Activated naive CD4-positive, alpha-beta T cell treated with anti-CD3 and anti-CD28 coated beads, Interleukin-2, amount 10 ng/mL, durations not matched to agents 7 days and 5 days (primary cell): ENCODE measurements at regions of chr4 and their contacts with region 1.

Region 1: DNA sequence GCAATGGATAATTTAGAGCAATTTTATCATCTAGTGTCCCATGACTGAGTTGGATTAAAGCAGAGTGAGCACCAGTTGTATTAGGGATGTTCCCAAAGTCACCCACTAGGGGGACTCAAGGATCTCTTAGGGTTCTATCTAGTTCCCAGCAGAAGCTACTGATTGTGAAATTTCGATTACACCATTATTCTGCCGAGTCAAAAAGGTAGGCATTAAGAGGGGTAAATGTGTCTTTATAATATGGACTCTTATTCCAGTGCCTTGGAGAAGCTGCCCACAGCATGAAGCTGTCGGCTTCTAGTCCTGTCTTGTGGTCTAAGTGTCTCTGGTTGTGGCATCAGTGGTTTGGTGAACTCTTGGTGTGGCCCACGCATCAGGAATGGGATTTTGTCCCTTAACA is 53.3 kb downstream of the RGS12 start:
- DNase-seq: peak; percentile 59
- H3K4me3 Mint-ChIP-seq: no peak overlapping the region
- H3K27ac Mint-ChIP-seq: no peak overlapping the region
- H3K4me1 Mint-ChIP-seq: peaks cover 16% of the 10 kb centered on the region
- H3K27me3 Mint-ChIP-seq: peaks cover 3% of the 10 kb centered on the region

Region 2: DNA sequence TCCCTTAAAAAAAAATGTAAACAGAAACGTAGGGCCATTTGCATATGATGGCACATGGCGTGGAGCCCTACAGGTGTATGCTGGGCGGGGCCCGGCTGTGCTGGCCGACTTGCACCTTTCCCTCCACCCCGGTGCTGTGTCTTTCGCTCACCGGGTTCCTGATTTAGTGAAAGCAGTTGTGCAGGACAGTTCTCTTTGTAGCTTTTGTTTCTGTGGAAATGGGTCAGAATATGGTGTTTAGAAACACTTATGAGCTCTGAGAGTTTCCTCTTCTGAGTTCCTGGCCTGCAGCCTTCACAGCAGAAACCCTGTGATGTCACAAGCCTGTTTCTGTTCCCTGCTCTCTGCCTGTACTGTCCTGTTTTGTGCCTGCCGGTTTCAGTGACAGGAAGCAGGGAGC is 119.7 kb before region 1 on chr4:
- CTCF ChIA-PET with region 1: no interaction called
- DNase-seq: no peak
- H3K4me3 Mint-ChIP-seq: no peak overlapping the region
- H3K27ac Mint-ChIP-seq: peak overlapping the region; percentile 33
- H3K4me1 Mint-ChIP-seq: peaks cover 4% of the 10 kb centered on the region
- H3K27me3 Mint-ChIP-seq: no peaks in the 10 kb centered on the region

Region 3: DNA sequence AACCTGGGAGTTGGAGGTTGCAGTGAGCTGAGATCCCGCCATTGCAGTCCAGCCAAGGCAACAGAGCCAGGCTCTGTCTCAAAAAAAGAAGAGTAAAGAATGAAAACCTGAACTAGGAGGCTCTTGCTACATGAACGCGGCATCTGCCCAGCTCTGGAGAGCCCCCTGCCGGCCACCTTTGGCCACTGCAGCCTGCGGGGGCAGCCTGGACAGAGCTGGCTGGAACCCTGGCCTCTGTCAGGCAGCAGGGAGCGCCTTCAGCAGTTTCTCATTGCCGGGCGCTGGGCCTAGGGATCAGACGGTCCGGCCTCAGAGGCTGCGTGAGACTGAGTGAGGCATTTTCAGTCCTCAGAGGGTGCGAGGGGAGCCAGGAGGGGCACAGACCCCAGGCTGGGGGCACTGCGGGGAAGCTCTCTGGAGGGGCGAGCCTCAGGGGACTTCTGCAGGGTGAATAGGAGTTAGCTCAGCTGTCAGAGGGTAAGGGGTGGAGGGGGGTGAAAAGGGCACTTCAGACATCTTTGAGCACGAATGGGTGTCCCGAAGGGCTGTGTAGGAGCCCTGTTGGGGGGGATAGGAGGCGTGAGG is 134.5 kb after region 1 on chr4:
- CTCF ChIA-PET with region 1: interaction called, 17 read pairs
- DNase-seq: peak; percentile 81
- H3K4me3 Mint-ChIP-seq: no peak overlapping the region
- H3K27ac Mint-ChIP-seq: no peak overlapping the region
- H3K4me1 Mint-ChIP-seq: no peaks in the 10 kb centered on the region
- H3K27me3 Mint-ChIP-seq: peaks cover 52% of the 10 kb centered on the region